Activated naive CD4-positive, alpha-beta T cell treated with anti-CD3 and anti-CD28 coated beads, Interleukin-2, amount 10 ng/mL, durations not matched to agents 7 days and 5 days (primary cell): ENCODE measurements at regions of chr14 and their contacts with region 1.

Region 1: DNA sequence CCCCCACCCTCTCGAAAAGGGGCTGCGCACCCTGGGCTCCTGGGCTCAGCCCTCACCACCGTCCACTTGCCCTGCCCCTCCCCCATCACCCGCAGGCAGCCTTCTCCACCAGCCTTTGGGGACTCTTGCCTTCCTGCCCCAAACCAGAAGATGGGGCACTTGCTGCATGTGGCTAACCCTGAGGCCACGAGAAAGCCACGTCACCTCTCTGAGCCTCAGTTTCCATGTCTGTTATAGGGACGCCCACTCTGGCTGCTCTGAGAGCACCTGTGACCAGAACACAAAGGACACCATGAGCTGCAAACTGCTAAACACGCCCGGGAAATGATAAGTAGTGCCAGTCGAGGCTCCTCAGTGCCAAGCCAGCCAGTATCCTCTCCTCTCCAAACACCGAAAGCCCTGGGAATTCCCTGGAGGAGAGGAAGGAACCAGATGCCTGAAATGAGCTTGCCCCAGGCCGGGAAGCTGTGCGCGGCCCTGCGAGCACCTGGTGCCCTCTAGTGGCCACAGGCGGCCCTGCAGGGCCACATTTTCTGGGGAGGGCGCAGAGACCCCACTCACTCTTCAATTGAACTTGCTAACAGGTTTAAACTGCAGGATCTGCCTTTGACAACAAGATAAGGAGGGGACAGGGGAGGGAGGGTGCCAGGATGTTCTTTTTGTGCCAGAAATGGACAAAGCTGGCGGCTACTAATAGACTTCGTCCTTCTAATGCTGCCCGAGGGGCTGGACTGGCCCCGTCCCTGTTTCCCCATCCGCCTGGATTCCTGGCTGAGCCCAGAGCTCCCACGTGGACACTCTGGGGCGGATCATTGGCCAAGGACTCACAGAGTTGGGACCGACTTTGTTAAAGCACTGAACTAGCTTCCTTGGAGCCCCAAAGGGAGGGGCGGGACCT is 10.2 kb upstream of the SERPINA9 start:
- DNase-seq: peak; percentile 51
- H3K4me3 Mint-ChIP-seq: no peak overlapping the region
- H3K27ac Mint-ChIP-seq: no peak overlapping the region
- H3K4me1 Mint-ChIP-seq: no peaks in the 10 kb centered on the region
- H3K27me3 Mint-ChIP-seq: peaks cover 40% of the 10 kb centered on the region

Region 2: DNA sequence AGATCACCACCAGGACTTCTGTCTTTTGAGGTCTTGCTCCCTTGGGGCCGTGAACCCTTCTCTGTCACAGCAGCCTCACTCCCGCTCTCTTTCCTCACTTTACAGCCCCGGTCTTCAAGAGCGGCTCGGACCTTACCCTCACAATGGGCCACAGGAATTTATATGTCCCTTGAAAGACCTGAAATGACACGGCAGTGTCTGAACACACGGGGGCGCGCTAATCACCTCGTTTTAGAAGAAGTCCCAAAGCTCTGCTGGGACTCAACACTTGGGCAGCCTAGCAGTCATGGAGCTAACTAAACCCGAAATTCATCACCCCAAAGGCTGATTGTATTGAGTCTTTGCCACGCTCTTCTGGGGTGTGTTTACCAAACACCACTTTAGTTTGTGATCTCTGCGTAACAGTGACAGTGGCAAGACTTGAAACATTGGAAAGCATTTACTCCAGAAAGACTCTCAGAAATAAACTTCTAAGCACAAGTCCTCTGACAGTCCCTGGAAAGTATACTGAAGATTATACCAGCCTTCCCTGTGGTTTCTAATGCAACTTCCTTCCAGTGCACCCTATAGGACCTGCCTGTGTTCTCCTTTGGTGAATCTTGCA is 62.6 kb before region 1 on chr14:
- CTCF ChIA-PET with region 1: interaction called, 14 read pairs
- DNase-seq: peak; percentile 63
- H3K4me3 Mint-ChIP-seq: no peak overlapping the region
- H3K27ac Mint-ChIP-seq: no peak overlapping the region
- H3K4me1 Mint-ChIP-seq: no peaks in the 10 kb centered on the region
- H3K27me3 Mint-ChIP-seq: peaks cover 9% of the 10 kb centered on the region

Region 3: DNA sequence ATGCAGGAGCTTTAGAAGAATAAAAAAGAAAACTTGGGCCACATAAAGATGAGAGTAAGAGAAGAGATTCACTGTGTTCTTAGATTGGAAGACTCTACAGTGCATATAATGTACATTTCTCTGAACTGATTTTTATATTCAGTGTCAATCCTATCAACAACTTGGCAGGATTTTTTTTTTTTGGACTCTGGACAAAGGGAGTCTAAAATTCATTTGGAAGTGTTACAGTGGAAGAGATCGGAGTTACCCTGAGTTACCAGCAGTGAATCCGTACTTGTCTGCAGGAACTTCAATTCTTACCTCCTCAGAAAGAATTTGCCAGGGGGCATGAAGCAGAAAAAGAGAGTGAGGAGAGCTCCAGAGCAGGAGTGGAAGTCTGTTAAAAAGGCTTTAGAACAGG is 57.6 kb before region 1 on chr14:
- CTCF ChIA-PET with region 1: interaction called, 24 read pairs
- DNase-seq: no peak
- H3K4me3 Mint-ChIP-seq: no peak overlapping the region
- H3K27ac Mint-ChIP-seq: no peak overlapping the region
- H3K4me1 Mint-ChIP-seq: no peaks in the 10 kb centered on the region
- H3K27me3 Mint-ChIP-seq: peaks cover 5% of the 10 kb centered on the region

Region 4: DNA sequence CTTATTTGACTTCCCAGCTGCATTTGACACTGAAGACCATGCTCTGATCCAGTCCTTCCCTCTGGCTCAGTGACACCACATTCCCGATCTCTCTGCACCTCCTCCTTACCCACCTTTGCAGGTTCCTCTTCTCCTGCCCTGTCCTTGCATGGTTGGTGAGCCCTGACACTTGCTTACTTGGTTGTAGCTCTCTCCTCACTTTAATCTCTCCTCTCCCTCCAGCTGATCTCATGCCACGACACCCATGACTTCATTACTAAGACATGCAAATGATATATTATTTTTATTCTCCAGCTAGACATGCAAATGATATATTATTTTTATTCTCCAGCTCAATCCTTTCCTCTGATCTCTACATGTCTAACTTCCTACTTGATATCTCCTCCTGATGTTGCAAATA is 10.2 kb before region 1 on chr14 and contains the start of gene SERPINA9:
- CTCF ChIA-PET with region 1: interaction called, 24 read pairs
- DNase-seq: no peak
- H3K4me3 Mint-ChIP-seq: no peak within 1 kb of the TSS
- H3K27ac Mint-ChIP-seq: no peak within 1 kb of the TSS
- H3K4me1 Mint-ChIP-seq: no peaks in the 10 kb centered on the region
- H3K27me3 Mint-ChIP-seq: peaks cover 5% of the 10 kb centered on the region

Region 5: DNA sequence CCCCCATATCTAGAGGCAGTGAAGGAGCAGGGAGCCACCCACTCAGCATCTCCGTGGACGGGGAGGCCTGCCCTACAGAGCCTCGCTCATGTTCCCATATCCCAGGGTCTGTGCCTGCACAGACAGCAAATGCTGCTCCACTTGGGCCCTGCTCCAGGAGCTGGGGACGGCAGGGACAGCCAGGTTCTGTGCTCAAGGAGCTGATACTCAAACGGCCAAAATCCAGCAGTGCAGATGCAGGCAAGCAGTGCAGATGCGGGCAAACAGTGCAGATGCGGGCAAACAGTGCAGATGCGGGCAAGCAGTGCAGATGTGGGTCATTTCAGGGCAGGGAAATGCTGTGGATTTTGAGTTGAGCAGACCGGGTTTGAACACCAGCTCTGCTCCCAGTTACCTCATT is 29.2 kb after region 1 on chr14:
- CTCF ChIA-PET with region 1: no interaction called
- DNase-seq: no peak
- H3K4me3 Mint-ChIP-seq: no peak overlapping the region
- H3K27ac Mint-ChIP-seq: no peak overlapping the region
- H3K4me1 Mint-ChIP-seq: no peaks in the 10 kb centered on the region
- H3K27me3 Mint-ChIP-seq: no peaks in the 10 kb centered on the region